Left ventricle myocardium superior (tissue), 1 donor: ENCODE measurements at regions of chr5 and their contacts with region 1.

Region 1: DNA sequence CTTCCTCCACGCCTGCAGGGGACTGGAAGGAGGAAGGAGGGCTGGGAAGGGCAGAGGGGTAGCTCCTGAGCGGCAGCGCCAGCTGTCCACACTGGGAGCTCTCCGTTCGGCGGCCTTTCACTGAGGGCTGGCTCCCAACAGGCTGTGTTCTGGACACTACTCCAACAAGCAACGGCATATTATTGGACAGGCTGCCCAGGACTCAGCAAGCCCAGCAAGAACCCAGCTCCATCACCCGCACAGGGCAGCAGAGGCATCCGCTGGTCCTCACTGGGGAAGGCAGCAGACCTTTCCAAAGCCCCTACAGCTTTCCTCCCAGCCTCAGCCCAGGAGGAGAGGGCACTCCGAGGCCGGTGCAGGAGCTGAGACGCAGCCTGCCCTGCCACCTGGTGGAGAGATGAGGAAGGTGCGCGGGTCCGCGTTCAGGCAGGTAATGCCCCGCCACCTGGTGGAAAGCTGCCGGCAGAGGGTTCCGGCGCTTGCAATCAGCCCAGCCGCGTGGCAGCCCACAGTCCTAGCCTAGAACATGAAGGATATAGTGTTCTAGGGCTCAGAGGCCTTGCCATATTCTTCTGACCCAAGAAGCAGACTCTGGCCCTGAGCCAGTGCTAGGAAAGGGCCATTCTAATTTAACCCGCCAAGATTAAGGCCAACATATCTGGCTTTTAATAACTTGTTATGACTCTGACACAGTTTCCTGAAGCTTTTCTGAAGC is 74.4 kb downstream of the NRG2 start:
- DNase-seq: peak; percentile 91
- ATAC-seq: peak; percentile 96

Region 2: GRCh38 chr5:139863855-139864558 is 104.7 kb before region 1 on chr5:
- intact Hi-C with region 1: loop called (anchors 10 kb)
- DNase-seq: peak; percentile 74
- ATAC-seq: peak; percentile 84